Esophagus squamous epithelium (tissue), 5 donors: ENCODE measurements at regions of chr11 and their contacts with region 1.

Region 1: DNA sequence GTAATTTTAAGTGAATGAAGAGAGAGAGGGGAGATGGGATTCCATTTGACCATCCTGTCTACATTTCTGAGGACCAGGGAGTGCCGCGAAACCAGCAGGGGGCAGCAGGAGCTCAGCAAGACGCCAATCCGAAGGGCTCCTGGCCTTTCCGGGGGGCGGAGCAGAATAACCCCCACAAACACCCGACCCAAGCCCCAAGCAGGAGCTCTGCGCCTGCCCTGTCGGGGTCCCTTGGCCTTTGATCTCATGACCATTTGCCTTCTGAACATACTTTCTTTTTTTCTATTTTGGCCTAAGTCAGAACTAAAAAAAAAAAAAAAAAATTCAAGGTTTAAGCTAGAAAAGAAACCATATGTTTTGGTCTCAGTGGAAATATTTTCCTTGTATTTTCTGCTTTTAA is 21.9 kb upstream of the SCN2B start:
- DNase-seq: no peak
- H3K4me3 ChIP-seq: peak overlapping the region in 2 of 4 donors; percentile 19 to 50
- H3K27ac ChIP-seq: peak overlapping the region in 2 of 4 donors; percentile 35 to 46
- H3K4me1 ChIP-seq: peaks cover 0 to 35% (median 15%) of the 10 kb centered on the region in 3 donors
- H3K27me3 ChIP-seq: no peaks in the 10 kb centered on the region
- CTCF ChIP-seq: peak; percentile 83 to 89 (median 88)
- POLR2A ChIP-seq: no peak

Region 2: GRCh38 chr11:118290923-118291322 is 92.6 kb after region 1 on chr11:
- intact Hi-C with region 1: loop called (anchors 5 kb)
- DNase-seq: no peak
- H3K4me3 ChIP-seq: no peak overlapping the region
- H3K27ac ChIP-seq: peak overlapping the region in 3 of 4 donors; percentile 3 to 21 (median 4)
- H3K4me1 ChIP-seq: peaks cover 0 to 22% (median 4%) of the 10 kb centered on the region in 3 donors
- H3K27me3 ChIP-seq: no peaks in the 10 kb centered on the region
- CTCF ChIP-seq: peak in 5 of 6 experiments; percentile 35 to 75 (median 65)
- POLR2A ChIP-seq: no peak

Region 3: DNA sequence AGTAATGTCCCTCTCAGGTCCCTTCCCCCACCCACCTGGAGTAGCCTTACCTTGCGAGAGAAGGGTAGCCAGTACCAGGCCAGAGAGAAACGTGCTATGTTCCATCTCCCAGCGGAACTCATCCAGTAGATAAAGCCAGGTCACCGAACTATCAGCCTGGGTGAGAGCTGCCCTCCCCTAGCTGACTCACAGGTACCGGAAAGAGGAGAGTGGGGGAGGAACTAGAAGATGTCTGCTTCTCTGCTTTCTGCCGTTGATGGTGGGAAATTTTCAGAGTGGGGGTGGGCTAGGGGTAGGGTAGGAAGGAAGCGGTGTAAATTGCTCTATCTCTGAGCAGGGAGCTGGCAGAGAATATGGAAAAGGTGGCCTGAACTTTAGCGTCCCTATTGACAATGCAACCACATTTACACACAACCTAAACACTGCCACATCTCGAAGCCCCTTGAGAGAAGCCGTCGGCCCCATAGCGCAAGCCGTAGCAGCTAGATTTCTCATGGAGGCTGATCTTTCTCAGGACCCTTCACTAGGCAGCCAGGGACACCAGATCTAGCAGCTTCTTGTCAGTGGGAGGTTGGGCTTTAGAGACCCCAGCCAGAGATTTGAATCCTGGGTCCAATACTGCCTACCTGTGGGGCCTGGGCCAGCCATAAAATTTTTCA is 144.3 kb after region 1 on chr11 and contains the start of gene CD3D:
- intact Hi-C with region 1: loop called (anchors 10 kb)
- DNase-seq: no peak
- H3K4me3 ChIP-seq: peak within 1 kb of the TSS; percentile 4 to 38 (median 24)
- H3K27ac ChIP-seq: peak within 1 kb of the TSS in 3 of 4 donors; percentile 3 to 49 (median 34)
- H3K4me1 ChIP-seq: peaks cover 0 to 9% (median 3%) of the 10 kb centered on the region in 3 donors
- H3K27me3 ChIP-seq: peaks cover 0 to 35% (median 0%) of the 10 kb centered on the region in 4 donors
- CTCF ChIP-seq: no peak
- POLR2A ChIP-seq: no peak
- total RNA-seq, gene CD3D: 5.7 to 11.8 (median 7.2) TPM